Pancreas (tissue), 10 donors: ENCODE measurements at regions of chr1 and their contacts with region 1.

Region 1: DNA sequence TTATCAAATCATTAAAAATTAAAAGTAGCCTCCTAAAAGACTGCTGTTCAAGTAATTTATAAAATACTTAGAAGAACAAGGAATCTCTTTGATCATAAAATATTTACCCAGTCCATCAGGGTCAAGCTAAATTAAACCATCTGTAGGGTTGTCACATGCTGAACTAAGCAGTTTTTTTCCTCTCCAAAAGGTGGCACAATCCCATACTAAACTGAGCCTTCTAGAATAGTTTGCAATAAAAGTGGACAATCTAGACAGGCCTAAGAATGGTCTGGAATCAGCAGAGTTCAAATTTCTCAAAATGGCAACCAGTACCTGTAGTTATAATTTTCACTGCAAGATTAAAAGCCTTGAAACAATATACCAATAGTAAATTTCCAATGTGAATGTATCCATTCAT is 194.8 kb downstream of the EIF4G3 start:
- DNase-seq: no peak
- ATAC-seq: peak; percentile 56 to 88 (median 82)
- H3K4me3 ChIP-seq: no peak overlapping the region
- H3K27ac ChIP-seq: no peak overlapping the region
- H3K4me1 ChIP-seq: no peaks in the 10 kb centered on the region
- H3K27me3 ChIP-seq: no peaks in the 10 kb centered on the region
- CTCF ChIP-seq: no peak

Region 2: DNA sequence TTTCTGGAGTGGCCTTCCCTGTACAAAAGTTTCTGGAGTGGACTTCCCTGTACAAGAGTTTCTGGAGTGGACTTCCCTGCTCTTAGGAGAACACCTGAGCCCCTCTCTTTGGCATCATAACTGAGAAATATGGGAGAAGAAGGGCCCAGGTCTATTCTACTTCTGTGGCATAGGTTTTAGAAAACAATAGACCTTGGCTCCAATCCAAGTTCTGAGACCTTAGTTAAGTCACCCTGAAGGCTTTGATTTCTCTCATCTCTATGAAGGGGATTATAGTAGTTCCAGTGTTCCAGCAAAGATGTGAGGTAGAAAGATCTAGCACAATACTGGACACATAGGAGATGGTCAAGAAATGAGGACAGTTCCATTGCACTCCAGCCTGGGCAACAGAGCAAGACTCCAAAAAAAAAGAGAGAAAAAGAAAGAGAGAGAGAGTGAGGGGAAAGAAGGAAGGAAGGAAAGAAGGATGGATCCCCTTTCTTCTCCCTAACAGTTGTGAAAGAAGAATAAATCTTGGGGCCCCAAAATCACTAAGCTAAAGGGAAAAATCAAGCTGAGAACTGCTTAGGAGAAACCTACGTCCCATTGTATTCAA is 208.1 kb after region 1 on chr1:
- intact Hi-C with region 1: loop called in 1 of 3 experiments (anchors 10 kb)
- DNase-seq: no peak
- ATAC-seq: no peak
- H3K4me3 ChIP-seq: no peak overlapping the region
- H3K27ac ChIP-seq: no peak overlapping the region
- H3K4me1 ChIP-seq: no peaks in the 10 kb centered on the region
- H3K27me3 ChIP-seq: no peaks in the 10 kb centered on the region
- CTCF ChIP-seq: no peak

Region 3: GRCh38 chr1:21534674-21535378 is 552.9 kb after region 1 on chr1:
- intact Hi-C with region 1: no loop called
- DNase-seq: peak in 2 of 6 donors; percentile 32 to 48
- ATAC-seq: peak; percentile 41 to 69 (median 64)
- H3K4me3 ChIP-seq: no peak overlapping the region
- H3K27ac ChIP-seq: no peak overlapping the region
- H3K4me1 ChIP-seq: peaks cover 5 to 12% (median 9%) of the 10 kb centered on the region in 3 donors
- H3K27me3 ChIP-seq: no peaks in the 10 kb centered on the region
- CTCF ChIP-seq: peak in 3 of 4 donors; percentile 14 to 35 (median 15)